Left ventricle myocardium superior (tissue), 1 donor: ENCODE measurements at regions of chr3 and their contacts with region 1.

Region 1: DNA sequence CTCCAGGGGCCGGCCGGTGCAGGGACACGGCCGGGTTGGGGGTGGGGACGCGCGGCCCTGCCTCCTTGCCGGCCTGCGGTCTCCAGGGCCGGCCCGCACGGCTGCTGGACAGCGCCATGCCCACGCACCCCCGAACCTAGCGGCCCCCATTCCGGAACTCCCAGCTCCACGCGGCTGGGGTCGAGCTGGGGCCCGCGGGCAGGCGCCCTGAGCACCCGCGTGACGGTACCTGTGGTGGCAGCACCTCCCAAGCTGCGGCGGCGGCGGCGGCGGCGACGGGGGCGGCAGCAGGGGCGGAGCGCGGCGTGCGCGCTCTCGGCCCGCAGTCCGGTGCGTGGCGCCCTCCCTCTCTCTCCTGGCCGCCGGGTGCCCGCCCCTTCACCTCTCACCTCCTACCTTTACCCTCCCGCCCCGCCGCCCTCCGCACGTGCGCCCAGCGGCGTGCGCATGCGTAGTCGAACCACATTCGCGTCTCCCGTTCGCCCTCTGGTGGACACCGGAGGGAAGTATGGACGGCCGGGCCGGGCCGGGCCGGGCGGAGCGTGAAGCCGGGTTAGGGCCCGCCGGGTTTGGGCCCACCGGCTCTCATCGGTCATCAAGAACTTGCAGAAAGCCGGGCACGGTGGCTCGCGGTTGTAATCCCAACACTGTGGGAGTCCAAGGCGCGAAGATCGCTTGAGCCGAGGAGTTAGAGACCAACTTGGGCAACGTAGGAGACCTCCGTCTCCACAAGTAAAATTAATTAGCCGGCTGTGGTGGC is at the start of gene SCAP:
- DNase-seq: peak; percentile 97
- ATAC-seq: peak; percentile 98
- total RNA-seq, gene SCAP: 53.0 TPM

Region 2: DNA sequence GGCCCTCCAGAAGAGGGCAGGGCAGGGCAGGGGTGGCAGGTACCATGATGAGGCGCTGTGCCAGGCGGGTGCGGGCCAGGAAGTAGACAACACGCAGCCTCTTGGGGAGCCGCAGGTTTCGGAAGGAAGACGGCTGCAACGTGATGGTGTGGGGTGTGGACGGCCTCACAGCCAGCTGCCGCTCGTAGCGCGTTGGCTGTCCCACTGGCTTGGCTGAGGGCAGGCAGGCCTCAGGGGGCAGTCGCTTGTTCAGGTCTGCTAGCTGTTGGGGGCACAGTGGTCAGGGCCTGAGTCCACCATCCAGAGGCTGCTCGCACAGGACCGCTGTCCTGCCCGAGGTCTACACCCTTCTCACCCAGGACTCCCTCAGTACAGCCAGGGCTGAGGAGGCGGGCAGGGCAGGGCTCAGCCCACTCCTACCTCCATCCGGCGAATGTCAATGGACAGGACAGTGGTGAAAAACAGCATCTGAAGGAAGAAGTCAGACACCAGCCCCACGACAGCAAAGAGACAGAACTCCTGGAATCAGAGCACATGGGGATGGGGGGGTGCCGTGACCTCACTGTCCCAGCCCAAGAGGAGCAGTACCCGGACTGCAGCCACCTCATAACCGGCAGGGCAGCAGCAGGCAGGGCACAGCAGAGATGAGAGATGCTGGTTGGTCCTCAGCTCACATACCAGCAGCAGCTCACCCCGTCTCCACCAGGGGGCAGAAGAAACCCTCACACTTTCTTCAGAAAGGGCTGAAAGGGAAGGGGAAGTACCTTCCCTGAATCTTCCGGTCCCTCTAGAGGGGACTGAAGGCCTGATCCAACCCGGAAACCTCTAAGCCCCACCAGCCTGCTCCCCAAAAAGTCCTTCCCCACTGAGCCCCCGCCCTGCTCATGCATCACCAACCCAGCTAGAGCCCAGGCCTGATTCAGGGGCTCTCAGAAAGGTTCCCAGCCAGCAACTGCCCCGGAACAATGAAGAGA is 55.0 kb before region 1 on chr3:
- intact Hi-C with region 1: loop called (anchors 10 kb)
- DNase-seq: peak; percentile 90
- ATAC-seq: peak; percentile 77